Naive thymus-derived CD4-positive, alpha-beta T cell (primary cell): ENCODE measurements at regions of chr13 and their contacts with region 1.

Region 1: DNA sequence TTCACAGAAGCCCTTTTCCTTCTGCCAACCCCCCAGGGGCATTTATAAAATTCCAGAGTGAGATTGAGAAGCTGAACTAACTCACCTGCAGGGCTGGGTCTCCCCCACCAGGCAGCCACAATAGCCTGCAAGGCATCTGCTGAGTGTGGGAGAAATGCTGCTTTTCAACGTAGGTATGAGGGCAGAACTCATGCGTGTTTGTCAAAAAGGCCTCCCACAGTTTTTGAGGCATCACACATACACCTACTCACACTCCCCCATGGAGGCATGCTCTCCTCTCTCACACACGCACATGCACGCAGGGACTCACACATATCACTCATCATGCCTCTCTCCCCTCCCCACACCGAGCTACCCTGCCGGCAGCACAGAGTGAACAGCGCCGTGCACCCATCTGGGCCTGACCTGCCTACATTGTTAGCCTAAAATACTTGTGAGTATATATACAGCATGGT is 390.5 kb downstream of the FGF9 start:
- DNase-seq: peak; percentile 19 to 74 (median 58)
- ATAC-seq: peak; percentile 76
- H3K4me3 ChIP-seq: peak overlapping the region; percentile 29
- H3K4me3 Mint-ChIP-seq: peak overlapping the region; percentile 39 to 83 (median 60)
- H3K27ac ChIP-seq: peak overlapping the region; percentile 81
- H3K27ac Mint-ChIP-seq: peak overlapping the region; percentile 94 to 100 (median 98)
- H3K4me1 ChIP-seq: peaks cover 57 to 70% of the 10 kb centered on the region in 2 donors
- H3K4me1 Mint-ChIP-seq: peaks cover 50 to 89% (median 83%) of the 10 kb centered on the region in 7 donors
- H3K27me3 ChIP-seq: no peaks in the 10 kb centered on the region
- H3K27me3 Mint-ChIP-seq: no peaks in the 10 kb centered on the region

Region 2: DNA sequence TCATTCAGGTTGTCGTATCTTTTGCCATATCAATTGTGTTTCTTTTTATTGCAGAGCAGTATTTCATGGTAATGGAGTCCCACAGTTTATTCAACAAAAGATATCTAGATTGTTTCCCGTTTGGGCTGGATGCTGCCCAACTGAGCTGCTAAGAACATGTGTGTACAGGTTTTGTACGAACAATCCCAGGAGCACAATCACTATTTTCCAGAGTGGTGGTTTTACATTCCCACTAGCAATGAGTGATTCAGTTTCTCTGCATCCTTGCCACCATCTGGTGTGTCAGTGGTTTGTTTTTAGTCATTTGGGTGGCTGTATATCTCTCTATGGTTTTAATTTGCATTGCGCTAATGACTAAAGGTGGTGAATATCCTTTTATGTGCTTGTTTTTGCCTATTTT is 549.5 kb before region 1 on chr13:
- CTCF ChIA-PET with region 1: no interaction called
- POLR2A ChIA-PET with region 1: no interaction called
- intact Hi-C with region 1: no loop called
- DNase-seq: no peak
- ATAC-seq: no peak
- H3K4me3 ChIP-seq: no peak overlapping the region
- H3K4me3 Mint-ChIP-seq: no peak overlapping the region
- H3K27ac ChIP-seq: no peak overlapping the region
- H3K27ac Mint-ChIP-seq: no peak overlapping the region
- H3K4me1 ChIP-seq: no peaks in the 10 kb centered on the region
- H3K4me1 Mint-ChIP-seq: no peaks in the 10 kb centered on the region
- H3K27me3 ChIP-seq: no peaks in the 10 kb centered on the region
- H3K27me3 Mint-ChIP-seq: no peaks in the 10 kb centered on the region

Region 3: DNA sequence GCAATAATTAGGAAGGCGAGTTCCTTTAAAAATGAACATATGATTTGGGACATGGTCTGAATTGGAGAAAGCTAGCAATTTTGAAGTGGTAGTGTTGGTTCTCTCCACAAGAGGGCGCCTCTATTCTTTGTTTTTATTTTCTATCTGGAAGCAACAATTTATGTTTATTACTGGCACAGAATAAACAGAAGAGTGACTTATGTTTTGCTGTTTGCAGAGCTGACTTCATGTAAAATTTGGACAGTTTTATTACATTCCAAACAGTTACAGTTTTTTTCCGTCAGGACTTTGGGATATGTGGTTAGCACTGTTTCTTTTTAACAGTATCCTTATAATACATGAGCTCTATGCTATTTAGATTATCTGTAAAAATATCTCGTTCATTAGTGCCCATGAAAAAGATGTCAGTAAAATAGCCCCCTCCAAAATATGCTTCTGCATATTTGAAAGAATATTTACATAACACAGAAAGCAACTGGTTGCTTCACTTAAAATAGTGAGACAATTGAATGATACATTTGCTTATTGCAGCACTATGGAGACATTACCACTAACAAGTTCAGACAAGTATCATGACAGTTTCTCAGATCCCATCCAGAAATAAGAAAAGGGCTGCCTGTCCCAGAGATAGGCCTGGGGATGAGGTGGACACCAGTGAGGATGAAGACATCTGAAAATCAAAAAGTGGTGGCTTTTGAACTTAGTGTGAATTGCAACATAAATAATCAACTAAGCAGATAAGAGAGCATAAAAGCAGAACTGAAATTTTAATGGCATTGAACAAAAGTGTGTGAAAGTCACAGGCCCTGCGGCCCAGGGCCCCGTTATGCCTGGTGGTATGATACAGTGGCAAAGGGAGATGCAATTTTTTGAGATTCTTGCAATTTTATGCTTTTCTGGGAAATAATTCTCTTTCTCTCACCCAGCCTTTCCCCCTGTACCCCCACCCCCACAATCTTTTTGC is 422.8 kb before region 1 on chr13:
- CTCF ChIA-PET with region 1: interaction called, 15 read pairs
- POLR2A ChIA-PET with region 1: no interaction called
- intact Hi-C with region 1: loop called in 1 of 2 experiments (anchors 1 kb)
- DNase-seq: peak in 5 of 9 donors; percentile 21 to 47 (median 38)
- ATAC-seq: peak; percentile 51
- H3K4me3 ChIP-seq: no peak overlapping the region
- H3K4me3 Mint-ChIP-seq: no peak overlapping the region
- H3K27ac ChIP-seq: no peak overlapping the region
- H3K27ac Mint-ChIP-seq: no peak overlapping the region
- H3K4me1 ChIP-seq: no peaks in the 10 kb centered on the region
- H3K4me1 Mint-ChIP-seq: peaks cover 0 to 5% (median 0%) of the 10 kb centered on the region in 7 donors
- H3K27me3 ChIP-seq: no peaks in the 10 kb centered on the region
- H3K27me3 Mint-ChIP-seq: peaks cover 0 to 7% (median 3%) of the 10 kb centered on the region in 5 donors

Region 4: DNA sequence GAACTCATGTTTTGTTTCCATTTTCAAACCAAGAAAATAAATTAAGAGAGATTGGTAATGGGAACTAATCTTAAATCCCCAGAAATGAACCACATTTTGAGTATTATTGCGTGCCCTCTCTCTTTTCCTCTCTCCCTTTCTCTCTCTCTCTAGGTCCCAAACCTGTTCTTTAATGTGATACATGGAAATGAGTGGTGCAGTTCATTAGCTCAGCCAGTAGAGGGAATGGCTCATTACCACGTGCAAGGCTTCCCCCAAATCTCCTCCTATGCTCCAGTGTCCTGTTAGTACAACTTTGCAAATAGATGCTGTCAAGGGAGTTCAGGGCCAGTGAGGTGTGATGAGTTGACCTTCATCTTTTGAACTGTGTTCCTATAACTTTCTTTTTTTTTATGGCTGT is 212.1 kb before region 1 on chr13:
- CTCF ChIA-PET with region 1: no interaction called
- POLR2A ChIA-PET with region 1: no interaction called
- intact Hi-C with region 1: loop called in 1 of 2 experiments (anchors 1 kb)
- DNase-seq: peak in 6 of 9 donors; percentile 2 to 37 (median 21)
- ATAC-seq: peak; percentile 70
- H3K4me3 ChIP-seq: no peak overlapping the region
- H3K4me3 Mint-ChIP-seq: no peak overlapping the region
- H3K27ac ChIP-seq: no peak overlapping the region
- H3K27ac Mint-ChIP-seq: no peak overlapping the region
- H3K4me1 ChIP-seq: no peaks in the 10 kb centered on the region
- H3K4me1 Mint-ChIP-seq: peaks cover 0 to 6% (median 2%) of the 10 kb centered on the region in 7 donors
- H3K27me3 ChIP-seq: no peaks in the 10 kb centered on the region
- H3K27me3 Mint-ChIP-seq: no peaks in the 10 kb centered on the region

Region 5: GRCh38 chr13:21932996-21933395 is 128.4 kb before region 1 on chr13:
- CTCF ChIA-PET with region 1: no interaction called
- POLR2A ChIA-PET with region 1: no interaction called
- intact Hi-C with region 1: no loop called
- DNase-seq: no peak
- ATAC-seq: no peak
- H3K4me3 ChIP-seq: no peak overlapping the region
- H3K4me3 Mint-ChIP-seq: no peak overlapping the region
- H3K27ac ChIP-seq: no peak overlapping the region
- H3K27ac Mint-ChIP-seq: no peak overlapping the region
- H3K4me1 ChIP-seq: no peaks in the 10 kb centered on the region
- H3K4me1 Mint-ChIP-seq: peaks cover 0 to 4% (median 0%) of the 10 kb centered on the region in 7 donors
- H3K27me3 ChIP-seq: no peaks in the 10 kb centered on the region
- H3K27me3 Mint-ChIP-seq: no peaks in the 10 kb centered on the region

Region 6: DNA sequence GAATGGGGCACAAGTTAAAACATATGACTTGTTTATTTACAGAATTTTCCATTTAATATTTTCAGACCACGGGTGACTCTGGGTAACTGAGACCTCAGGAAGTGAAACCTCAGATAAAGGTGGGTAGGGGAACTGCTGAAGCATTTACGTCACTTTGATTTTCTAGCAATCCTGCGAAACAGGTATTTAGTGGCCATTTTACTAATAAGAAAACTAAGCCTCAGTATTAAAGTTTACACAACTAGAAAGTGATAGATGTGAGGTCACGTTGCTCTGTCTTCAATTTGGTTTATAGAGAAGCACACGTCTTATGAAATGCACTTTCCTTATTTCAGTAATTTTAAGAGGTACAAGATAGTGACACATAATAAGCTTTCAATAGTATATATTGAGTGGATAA is 12.3 kb after region 1 on chr13:
- CTCF ChIA-PET with region 1: interaction called, 3 read pairs
- POLR2A ChIA-PET with region 1: interaction called, 4 read pairs
- intact Hi-C with region 1: loop called (anchors 1 to 2 kb)
- DNase-seq: no peak
- ATAC-seq: no peak
- H3K4me3 ChIP-seq: no peak overlapping the region
- H3K4me3 Mint-ChIP-seq: no peak overlapping the region
- H3K27ac ChIP-seq: no peak overlapping the region
- H3K27ac Mint-ChIP-seq: no peak overlapping the region
- H3K4me1 ChIP-seq: peaks cover 0 to 4% of the 10 kb centered on the region in 2 donors
- H3K4me1 Mint-ChIP-seq: peaks cover 8 to 34% (median 22%) of the 10 kb centered on the region in 7 donors
- H3K27me3 ChIP-seq: no peaks in the 10 kb centered on the region
- H3K27me3 Mint-ChIP-seq: peaks cover 0 to 2% (median 0%) of the 10 kb centered on the region in 5 donors

Region 7: DNA sequence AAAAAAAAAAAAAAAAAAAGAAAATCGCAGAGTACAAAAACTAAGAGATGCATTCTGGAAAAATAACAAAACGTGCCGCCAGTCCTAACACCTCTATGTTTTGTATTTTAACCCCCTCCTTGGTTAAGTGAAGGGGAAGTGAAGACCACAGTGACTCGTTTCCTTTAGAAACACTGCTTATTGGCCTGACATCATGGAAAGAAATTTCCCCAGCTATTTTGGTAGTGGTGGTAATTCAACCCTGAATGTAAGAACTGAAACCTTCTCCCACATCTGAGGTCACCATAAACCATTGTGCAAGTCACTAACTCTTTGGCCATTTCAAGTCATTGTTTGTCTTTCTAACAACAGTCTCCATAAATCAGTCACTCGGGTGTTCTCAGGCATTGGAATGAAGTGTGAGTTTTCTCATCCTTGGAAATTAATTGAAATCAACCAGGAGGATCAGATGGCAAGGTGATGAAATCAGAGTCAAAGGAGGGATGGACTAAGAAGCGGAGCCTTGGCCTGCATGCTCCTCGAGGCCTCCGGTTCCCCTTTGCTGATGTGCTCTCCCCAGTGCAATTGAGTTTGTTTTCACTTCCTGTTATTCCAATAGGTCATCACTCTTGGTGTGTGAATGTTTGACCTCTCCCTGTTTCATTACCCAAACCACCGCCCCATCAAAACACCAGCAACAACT is 53.4 kb after region 1 on chr13:
- CTCF ChIA-PET with region 1: no interaction called
- POLR2A ChIA-PET with region 1: no interaction called
- intact Hi-C with region 1: loop called (anchors 1 kb)
- DNase-seq: peak in 7 of 9 donors; percentile 46 to 85 (median 63)
- ATAC-seq: peak; percentile 93
- H3K4me3 ChIP-seq: no peak overlapping the region
- H3K4me3 Mint-ChIP-seq: peak overlapping the region in 9 of 10 donors; percentile 16 to 64 (median 37)
- H3K27ac ChIP-seq: no peak overlapping the region
- H3K27ac Mint-ChIP-seq: peak overlapping the region; percentile 20 to 89 (median 84)
- H3K4me1 ChIP-seq: peaks cover 7 to 19% of the 10 kb centered on the region in 2 donors
- H3K4me1 Mint-ChIP-seq: peaks cover 16 to 51% (median 37%) of the 10 kb centered on the region in 7 donors
- H3K27me3 ChIP-seq: no peaks in the 10 kb centered on the region
- H3K27me3 Mint-ChIP-seq: peaks cover 0 to 2% (median 0%) of the 10 kb centered on the region in 5 donors

Region 8: GRCh38 chr13:22187329-22187728 is 126.0 kb after region 1 on chr13:
- CTCF ChIA-PET with region 1: no interaction called
- POLR2A ChIA-PET with region 1: interaction called, 3 read pairs
- intact Hi-C with region 1: loop called in 1 of 2 experiments (anchors 5 kb)
- DNase-seq: peak in 2 of 9 donors; percentile 7 to 10
- ATAC-seq: no peak
- H3K4me3 ChIP-seq: no peak overlapping the region
- H3K4me3 Mint-ChIP-seq: no peak overlapping the region
- H3K27ac ChIP-seq: no peak overlapping the region
- H3K27ac Mint-ChIP-seq: no peak overlapping the region
- H3K4me1 ChIP-seq: no peaks in the 10 kb centered on the region
- H3K4me1 Mint-ChIP-seq: peaks cover 0 to 17% (median 0%) of the 10 kb centered on the region in 7 donors
- H3K27me3 ChIP-seq: no peaks in the 10 kb centered on the region
- H3K27me3 Mint-ChIP-seq: peaks cover 0 to 2% (median 0%) of the 10 kb centered on the region in 5 donors

Region 9: GRCh38 chr13:22200440-22200839 is 139.1 kb after region 1 on chr13:
- CTCF ChIA-PET with region 1: no interaction called
- POLR2A ChIA-PET with region 1: no interaction called
- intact Hi-C with region 1: no loop called
- DNase-seq: no peak
- ATAC-seq: no peak
- H3K4me3 ChIP-seq: no peak overlapping the region
- H3K4me3 Mint-ChIP-seq: no peak overlapping the region
- H3K27ac ChIP-seq: no peak overlapping the region
- H3K27ac Mint-ChIP-seq: no peak overlapping the region
- H3K4me1 ChIP-seq: no peaks in the 10 kb centered on the region
- H3K4me1 Mint-ChIP-seq: peaks cover 0 to 5% (median 0%) of the 10 kb centered on the region in 7 donors
- H3K27me3 ChIP-seq: no peaks in the 10 kb centered on the region
- H3K27me3 Mint-ChIP-seq: no peaks in the 10 kb centered on the region

Region 10: GRCh38 chr13:22278336-22278929 is 217.1 kb after region 1 on chr13:
- CTCF ChIA-PET with region 1: interaction called, 5 read pairs
- POLR2A ChIA-PET with region 1: interaction called, 3 read pairs
- intact Hi-C with region 1: loop called (anchors 1 to 10 kb)
- DNase-seq: peak; percentile 27 to 71 (median 55)
- ATAC-seq: peak; percentile 73
- H3K4me3 ChIP-seq: no peak overlapping the region
- H3K4me3 Mint-ChIP-seq: peak overlapping the region in 1 of 10 donors; percentile 14
- H3K27ac ChIP-seq: no peak overlapping the region
- H3K27ac Mint-ChIP-seq: peak overlapping the region in 2 of 9 donors; percentile 5 to 43
- H3K4me1 ChIP-seq: peaks cover 0 to 4% of the 10 kb centered on the region in 2 donors
- H3K4me1 Mint-ChIP-seq: peaks cover 0 to 21% (median 7%) of the 10 kb centered on the region in 7 donors
- H3K27me3 ChIP-seq: no peaks in the 10 kb centered on the region
- H3K27me3 Mint-ChIP-seq: no peaks in the 10 kb centered on the region